IMR-90 (cell line): ENCODE measurements at regions of chr20 and their contacts with region 1.

Region 1: DNA sequence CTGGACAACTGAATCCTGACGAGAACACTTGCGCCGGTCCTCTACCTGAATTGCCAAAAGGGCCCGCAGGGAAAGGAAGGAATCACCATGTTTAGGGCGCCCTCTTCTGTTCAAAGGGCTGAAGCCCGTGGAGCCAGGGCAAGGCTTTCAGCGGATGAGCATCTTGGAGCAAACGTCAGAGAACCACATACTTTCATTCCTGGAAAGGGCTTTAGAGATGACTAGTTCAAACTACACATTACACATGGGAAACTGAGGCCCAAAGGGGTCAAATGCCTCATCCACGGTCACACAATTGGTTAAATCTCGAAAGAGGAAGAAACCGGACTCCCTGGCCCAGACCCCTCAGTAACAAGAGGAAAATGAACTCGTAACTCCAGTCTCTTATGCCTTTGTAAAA is 11.5 kb upstream of the ZNF133 start:
- DNase-seq: peak; percentile 71
- ATAC-seq: peak; percentile 96
- H3K4me3 ChIP-seq: no peak overlapping the region
- H3K27ac ChIP-seq: no peak overlapping the region
- H3K4me1 ChIP-seq: peaks cover 1% of the 10 kb centered on the region; the same call in 1 of the 2 replicates
- H3K27me3 ChIP-seq: peaks cover 10% of the 10 kb centered on the region
- CTCF ChIP-seq: peak; percentile 86
- POLR2A ChIP-seq: no peak
- RAD21 ChIP-seq: peak; percentile 79

Region 2: DNA sequence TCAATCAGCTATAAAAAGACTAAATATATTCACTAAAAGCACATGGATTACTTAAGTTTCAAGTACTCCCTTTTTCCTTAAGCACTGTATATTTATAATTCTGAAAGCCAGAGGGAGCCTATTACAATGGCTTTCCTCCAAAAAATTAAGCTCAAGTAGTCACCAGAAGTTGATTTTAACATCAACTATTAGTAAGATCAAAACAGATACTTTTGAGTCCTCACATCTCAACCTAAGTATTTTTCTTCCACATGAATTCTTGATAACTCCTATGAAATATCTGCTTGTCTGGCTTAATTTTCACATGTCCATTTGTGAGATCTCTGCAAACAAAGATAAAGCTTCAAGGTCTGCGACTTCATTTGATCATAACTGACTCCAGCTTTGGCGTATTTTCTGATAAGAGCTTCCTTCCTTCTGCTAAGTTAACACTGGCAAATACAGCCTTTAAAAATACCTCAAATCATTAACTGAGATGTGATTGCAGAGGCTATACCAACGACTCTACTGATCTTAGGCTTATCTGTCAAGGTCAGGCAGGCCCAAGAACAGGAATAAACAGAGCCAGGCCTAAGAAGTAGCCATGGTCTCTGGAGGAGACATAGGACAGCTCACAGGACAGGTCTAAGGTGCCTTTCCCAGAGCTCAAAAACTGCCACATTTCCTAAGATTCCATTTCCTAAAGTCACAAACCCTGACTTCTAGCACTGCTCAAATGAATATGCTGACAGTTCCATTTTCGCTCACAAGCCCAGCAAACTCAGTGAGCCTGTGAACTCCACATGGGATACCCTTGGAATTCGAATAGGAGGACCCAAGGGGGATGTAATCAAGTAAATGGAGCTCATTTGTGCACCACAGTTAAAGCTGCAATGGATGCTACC is 318.2 kb before region 1 on chr20:
- CTCF ChIA-PET with region 1: no interaction called
- POLR2A ChIA-PET with region 1: no interaction called
- dilution Hi-C with region 1: no loop called
- in situ Hi-C with region 1: no loop called
- intact Hi-C with region 1: loop called (anchors 5 kb)
- DNase-seq: peak; percentile 61
- ATAC-seq: peak; percentile 11
- H3K4me3 ChIP-seq: no peak overlapping the region
- H3K27ac ChIP-seq: peak overlapping the region; percentile 88; the same call in 1 of the 2 replicates
- H3K4me1 ChIP-seq: peaks cover 24% of the 10 kb centered on the region
- H3K27me3 ChIP-seq: no peaks in the 10 kb centered on the region
- CTCF ChIP-seq: peak; percentile 31; the same call in 1 of the 2 replicates
- POLR2A ChIP-seq: no peak
- RAD21 ChIP-seq: no peak

Region 3: DNA sequence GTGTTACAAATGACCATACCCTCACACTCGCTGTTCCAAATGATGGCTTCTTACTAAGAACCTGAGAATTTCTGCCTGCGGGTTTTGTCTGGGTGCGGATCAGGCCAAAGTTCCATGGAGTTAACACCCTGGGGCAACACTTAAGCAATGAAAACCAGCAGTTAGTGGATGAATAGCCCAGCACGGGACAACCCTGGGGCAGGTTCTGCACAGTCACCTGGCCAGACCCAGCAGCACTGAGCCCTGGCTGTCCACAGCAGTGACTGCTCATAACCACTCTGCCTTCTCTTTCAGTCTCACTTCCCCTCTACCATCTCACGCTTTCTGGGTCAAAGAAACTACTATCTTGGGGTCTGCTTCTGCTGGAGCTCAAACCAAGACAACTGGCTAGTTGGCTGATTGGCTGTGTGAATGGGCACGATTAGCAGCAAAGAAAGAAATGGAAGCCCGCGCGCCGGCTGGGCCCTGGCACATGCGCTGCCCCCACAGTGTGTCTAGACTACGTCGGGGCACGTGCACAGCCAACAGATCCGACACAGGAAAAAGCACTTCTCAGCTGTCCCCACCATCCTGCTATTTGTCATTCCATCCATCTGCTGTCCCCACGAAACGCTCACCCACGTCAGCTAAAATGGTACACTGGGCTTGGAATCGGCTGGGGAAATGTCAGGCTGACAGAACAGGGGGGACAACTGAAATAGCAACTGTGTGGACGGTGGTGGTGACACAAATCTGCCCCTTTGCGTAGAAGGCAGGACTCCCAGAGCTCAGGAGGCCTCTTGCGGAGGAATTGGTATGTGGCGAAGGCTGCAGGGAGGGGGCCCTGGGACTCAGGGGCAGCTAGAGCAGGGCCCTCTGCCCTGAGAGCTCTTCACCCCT is 271.4 kb before region 1 on chr20:
- CTCF ChIA-PET with region 1: no interaction called
- POLR2A ChIA-PET with region 1: no interaction called
- dilution Hi-C with region 1: no loop called
- in situ Hi-C with region 1: no loop called
- intact Hi-C with region 1: loop called (anchors 5 kb)
- DNase-seq: no peak
- ATAC-seq: peak; percentile 16
- H3K4me3 ChIP-seq: no peak overlapping the region
- H3K27ac ChIP-seq: no peak overlapping the region
- H3K4me1 ChIP-seq: peaks cover 15% of the 10 kb centered on the region; the same call in 1 of the 2 replicates
- H3K27me3 ChIP-seq: no peaks in the 10 kb centered on the region
- CTCF ChIP-seq: no peak
- POLR2A ChIP-seq: no peak
- RAD21 ChIP-seq: no peak

Region 4: GRCh38 chr20:18137412-18138265 is 139.2 kb before region 1 on chr20 and contains the starts of genes KAT14 and PET117:
- CTCF ChIA-PET with region 1: no interaction called
- POLR2A ChIA-PET with region 1: no interaction called
- dilution Hi-C with region 1: no loop called
- in situ Hi-C with region 1: no loop called
- intact Hi-C with region 1: loop called (anchors 5 kb)
- DNase-seq: peak; percentile 89
- ATAC-seq: peak; percentile 96
- H3K4me3 ChIP-seq: peak within 1 kb of the TSS; percentile 99
- H3K27ac ChIP-seq: peak within 1 kb of the TSS; percentile 94
- H3K4me1 ChIP-seq: peaks cover 2% of the 10 kb centered on the region; the same call in 1 of the 2 replicates
- H3K27me3 ChIP-seq: peaks cover 4% of the 10 kb centered on the region; the same call in 1 of the 2 replicates
- CTCF ChIP-seq: no peak
- POLR2A ChIP-seq: peak; percentile 42; the same call in 1 of the 2 replicates
- RAD21 ChIP-seq: no peak
- total RNA-seq, gene KAT14: 12.4 and 15.3 TPM in 2 replicates
- total RNA-seq, gene PET117: 3.9 and 12.8 TPM in 2 replicates